ENCODE measurements at regions of chr1 and their contacts with region 1.

Region 1: DNA sequence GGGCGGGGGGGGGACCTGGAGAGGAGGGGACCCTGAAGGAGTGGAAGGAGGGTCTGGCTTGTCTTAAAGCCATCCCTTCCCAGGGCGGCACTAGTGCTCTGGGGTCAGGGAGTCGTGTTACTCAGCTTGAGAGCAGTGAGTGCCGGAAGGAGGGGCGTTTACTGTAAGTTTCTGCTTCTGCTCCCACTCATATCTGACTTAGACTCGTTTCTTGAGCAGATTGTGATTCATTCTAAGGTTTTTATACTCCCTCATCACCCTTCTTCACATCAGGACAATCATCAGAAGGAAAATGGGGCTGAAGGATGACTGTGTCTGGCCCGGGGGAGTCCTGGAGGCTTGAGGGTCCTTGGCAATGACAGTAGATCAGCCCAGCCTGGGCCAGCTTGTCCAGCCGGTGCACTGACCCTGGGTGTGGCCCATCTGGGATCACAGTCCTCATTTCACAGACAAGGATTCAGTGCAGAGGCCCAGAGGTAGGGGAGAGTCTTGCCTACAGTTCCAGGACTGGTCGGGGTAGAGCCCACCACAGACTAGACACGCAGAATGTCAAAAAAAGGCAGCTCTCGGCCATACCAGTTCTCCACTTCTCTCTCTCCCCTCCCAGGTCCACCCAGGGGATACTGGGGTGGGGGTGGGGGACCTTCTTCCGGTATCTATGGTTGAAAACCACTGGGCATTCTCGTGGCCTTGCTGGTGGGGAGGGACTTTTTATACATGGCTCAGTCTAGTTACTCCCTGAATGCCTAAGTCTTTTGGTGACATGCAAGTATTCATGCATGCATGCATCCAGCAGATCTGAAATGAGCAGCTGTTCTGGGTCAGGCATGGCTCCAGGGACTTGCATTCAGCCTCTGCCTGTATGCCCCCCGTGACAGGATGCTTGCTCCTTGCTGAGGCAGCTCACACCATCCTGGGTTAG is 5.1 kb downstream of the TNFRSF8 start:
- DNase-seq: peak in 1 of 9 donors; percentile 61
- ATAC-seq: no peak
- H3K4me3 ChIP-seq: no peak overlapping the region
- H3K4me3 Mint-ChIP-seq: peak overlapping the region in 2 of 10 donors; percentile 5 to 80
- H3K27ac ChIP-seq: no peak overlapping the region
- H3K27ac Mint-ChIP-seq: peak overlapping the region in 1 of 9 donors; percentile 85
- H3K4me1 ChIP-seq: peaks cover 5 to 34% of the 10 kb centered on the region in 2 donors
- H3K4me1 Mint-ChIP-seq: peaks cover 5 to 70% (median 18%) of the 10 kb centered on the region in 7 donors
- H3K27me3 ChIP-seq: peaks cover 7 to 13% of the 10 kb centered on the region in 2 donors
- H3K27me3 Mint-ChIP-seq: peaks cover 12 to 66% (median 49%) of the 10 kb centered on the region in 5 donors

Region 2: GRCh38 chr1:12047120-12047876 is 20.9 kb before region 1 on chr1:
- CTCF ChIA-PET with region 1: no interaction called
- POLR2A ChIA-PET with region 1: no interaction called
- intact Hi-C with region 1: loop called in 1 of 2 experiments (anchors 1 kb)
- DNase-seq: peak in 4 of 9 donors; percentile 6 to 76 (median 20)
- ATAC-seq: peak; percentile 60
- H3K4me3 ChIP-seq: peak overlapping the region; percentile 39
- H3K4me3 Mint-ChIP-seq: no peak overlapping the region
- H3K27ac ChIP-seq: no peak overlapping the region
- H3K27ac Mint-ChIP-seq: no peak overlapping the region
- H3K4me1 ChIP-seq: peaks cover 9 to 18% of the 10 kb centered on the region in 2 donors
- H3K4me1 Mint-ChIP-seq: peaks cover 0 to 19% (median 0%) of the 10 kb centered on the region in 7 donors
- H3K27me3 ChIP-seq: no peaks in the 10 kb centered on the region
- H3K27me3 Mint-ChIP-seq: peaks cover 0 to 2% (median 0%) of the 10 kb centered on the region in 5 donors

Region 3: DNA sequence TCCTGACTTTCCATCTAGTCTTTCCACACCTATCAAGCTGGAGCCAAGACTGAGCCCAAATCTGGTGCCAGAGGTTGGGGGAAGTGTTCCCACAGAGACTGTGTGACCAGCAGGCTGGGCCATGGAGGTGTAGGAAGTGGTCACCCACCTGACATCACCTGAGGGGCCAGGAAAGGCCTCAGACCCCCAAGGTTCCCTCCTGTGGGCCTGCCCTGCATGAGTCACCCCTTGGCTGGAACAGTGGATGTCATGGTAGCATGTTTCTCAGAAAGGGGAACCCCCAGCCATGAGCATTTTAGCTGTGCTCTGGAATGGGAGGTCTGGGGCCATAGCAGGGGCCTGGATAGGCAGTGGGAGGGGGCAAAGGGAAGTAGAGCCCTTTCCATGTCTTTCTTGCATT is 10.8 kb before region 1 on chr1:
- CTCF ChIA-PET with region 1: no interaction called
- POLR2A ChIA-PET with region 1: no interaction called
- intact Hi-C with region 1: no loop called
- DNase-seq: peak in 1 of 9 donors; percentile 61
- ATAC-seq: no peak
- H3K4me3 ChIP-seq: no peak overlapping the region
- H3K4me3 Mint-ChIP-seq: no peak overlapping the region
- H3K27ac ChIP-seq: no peak overlapping the region
- H3K27ac Mint-ChIP-seq: peak overlapping the region in 1 of 9 donors; percentile 50
- H3K4me1 ChIP-seq: peaks cover 0 to under 1% of the 10 kb centered on the region in 2 donors
- H3K4me1 Mint-ChIP-seq: peaks cover 0 to 53% (median 0%) of the 10 kb centered on the region in 7 donors
- H3K27me3 ChIP-seq: no peaks in the 10 kb centered on the region
- H3K27me3 Mint-ChIP-seq: peaks cover 0 to 7% (median 0%) of the 10 kb centered on the region in 5 donors

Region 4: GRCh38 chr1:12087797-12088314 is 19.7 kb after region 1 on chr1:
- CTCF ChIA-PET with region 1: no interaction called
- POLR2A ChIA-PET with region 1: no interaction called
- intact Hi-C with region 1: loop called in 1 of 2 experiments (anchors 2 kb)
- DNase-seq: peak in 5 of 9 donors; percentile 10 to 69 (median 25)
- ATAC-seq: peak; percentile 72
- H3K4me3 ChIP-seq: peak overlapping the region; percentile 52
- H3K4me3 Mint-ChIP-seq: peak overlapping the region; percentile 46 to 78 (median 70)
- H3K27ac ChIP-seq: peak overlapping the region; percentile 53
- H3K27ac Mint-ChIP-seq: peak overlapping the region; percentile 52 to 95 (median 89)
- H3K4me1 ChIP-seq: peaks cover 33% of the 10 kb centered on the region in 2 donors
- H3K4me1 Mint-ChIP-seq: peaks cover 35 to 57% (median 49%) of the 10 kb centered on the region in 7 donors
- H3K27me3 ChIP-seq: no peaks in the 10 kb centered on the region
- H3K27me3 Mint-ChIP-seq: no peaks in the 10 kb centered on the region

Measured in naive thymus-derived CD4-positive, alpha-beta T cell (primary cell).